ENCODE measurements at regions of chr1 and their contacts with region 1.

Region 1: DNA sequence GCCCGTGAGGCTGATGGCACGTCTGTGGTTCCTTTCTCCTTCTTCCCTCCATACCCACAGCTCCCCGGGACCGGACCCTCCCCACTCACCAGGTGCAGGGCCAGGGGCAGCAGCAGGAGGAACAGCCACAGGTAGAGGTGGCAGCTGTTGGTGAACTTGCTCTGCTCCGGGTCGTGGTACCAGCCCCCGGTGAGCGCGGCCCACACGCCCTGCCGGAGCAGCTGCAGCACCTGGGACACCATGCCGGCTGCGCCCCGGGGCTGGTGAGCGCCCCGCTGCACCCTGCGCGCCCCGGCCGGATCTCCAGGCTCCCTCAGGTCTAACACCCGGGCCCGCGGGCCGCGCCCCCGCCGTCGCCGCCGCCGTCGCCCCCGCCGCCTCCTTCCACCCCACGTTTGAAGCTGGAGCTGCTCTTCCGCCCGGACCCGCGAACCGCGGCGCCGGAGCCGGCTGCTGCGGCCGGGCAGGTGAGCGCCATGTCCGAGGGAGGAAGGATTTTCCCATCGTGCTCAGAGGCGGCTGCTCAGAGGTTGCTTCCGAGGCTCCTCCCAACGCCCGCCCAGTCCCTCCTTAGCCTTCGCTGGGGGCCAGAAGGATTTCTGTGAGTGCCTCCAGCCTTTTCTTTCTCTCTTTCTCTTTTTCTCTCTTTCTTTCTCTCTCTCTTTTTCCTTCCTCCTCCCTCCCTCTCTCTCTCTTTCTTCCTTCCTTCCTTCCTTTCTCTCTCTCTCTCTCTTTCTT is at the start of gene PCNX2:
- DNase-seq: peak; percentile 85
- ATAC-seq: peak; percentile 87
- H3K4me3 Mint-ChIP-seq: peak within 1 kb of the TSS; percentile 95
- H3K27ac Mint-ChIP-seq: peak within 1 kb of the TSS; percentile 96
- H3K4me1 Mint-ChIP-seq: peaks cover 32% of the 10 kb centered on the region
- H3K27me3 Mint-ChIP-seq: no peaks in the 10 kb centered on the region
- total RNA-seq, gene PCNX2: 14.7 to 18.1 TPM

Region 2: GRCh38 chr1:233158322-233158721 is 137.1 kb before region 1 on chr1:
- CTCF ChIA-PET with region 1: no interaction called
- POLR2A ChIA-PET with region 1: no interaction called
- intact Hi-C with region 1: no loop called
- DNase-seq: no peak
- ATAC-seq: no peak
- H3K4me3 Mint-ChIP-seq: no peak overlapping the region
- H3K27ac Mint-ChIP-seq: no peak overlapping the region
- H3K4me1 Mint-ChIP-seq: no peaks in the 10 kb centered on the region
- H3K27me3 Mint-ChIP-seq: no peaks in the 10 kb centered on the region

Region 3: GRCh38 chr1:233281711-233282581 is 13.5 kb before region 1 on chr1:
- CTCF ChIA-PET with region 1: interaction called, 5 read pairs
- POLR2A ChIA-PET with region 1: no interaction called
- intact Hi-C with region 1: loop called in 1 of 2 experiments (anchors 1 kb)
- DNase-seq: peak; percentile 46
- ATAC-seq: peak; percentile 75
- H3K4me3 Mint-ChIP-seq: peak overlapping the region; percentile 53
- H3K27ac Mint-ChIP-seq: peak overlapping the region; percentile 93
- H3K4me1 Mint-ChIP-seq: peaks cover 43% of the 10 kb centered on the region
- H3K27me3 Mint-ChIP-seq: no peaks in the 10 kb centered on the region

Region 4: DNA sequence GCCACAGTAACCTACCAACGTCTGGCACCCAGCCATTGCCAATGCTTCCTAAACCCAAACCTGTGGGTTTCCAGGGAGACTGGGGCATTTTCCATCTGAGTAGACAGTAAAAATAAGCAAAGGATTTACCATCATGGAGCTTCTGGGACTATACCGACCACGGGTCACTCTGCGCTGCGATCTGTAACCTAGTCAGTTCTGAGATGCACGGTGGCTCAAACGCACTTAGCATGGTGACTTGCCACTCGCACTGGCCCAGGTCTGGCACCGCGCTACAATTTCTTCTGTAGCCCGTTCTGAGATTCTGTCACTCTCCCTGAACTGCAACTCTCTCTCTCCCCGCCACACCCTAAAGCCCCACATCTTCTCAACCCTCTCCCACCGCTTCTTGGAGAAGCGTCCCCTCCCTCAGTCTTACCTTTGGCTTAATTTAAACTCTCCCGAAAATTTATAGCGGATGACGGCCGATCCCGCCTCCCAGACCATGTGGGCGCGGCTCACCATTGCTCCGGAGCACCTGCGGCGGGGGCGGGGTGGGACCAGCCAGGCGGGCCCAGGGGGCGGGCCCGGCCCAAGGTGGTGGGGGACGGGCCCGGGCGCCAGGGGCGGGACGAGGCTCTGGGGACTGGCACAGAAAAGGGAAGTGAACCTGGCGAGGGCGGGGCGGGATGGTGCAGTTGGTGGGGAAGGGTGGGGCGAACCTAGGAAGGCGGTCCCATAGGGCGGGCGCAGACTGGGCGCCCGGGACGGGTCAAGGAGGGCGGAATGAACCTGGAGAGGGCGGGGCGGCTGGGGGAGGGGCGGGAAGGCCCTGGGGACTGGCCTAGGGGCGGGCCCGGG is 31.6 kb after region 1 on chr1:
- CTCF ChIA-PET with region 1: no interaction called
- POLR2A ChIA-PET with region 1: no interaction called
- intact Hi-C with region 1: loop called in 1 of 2 experiments (anchors 1 kb)
- DNase-seq: peak; percentile 94
- ATAC-seq: peak; percentile 97
- H3K4me3 Mint-ChIP-seq: peak overlapping the region; percentile 69
- H3K27ac Mint-ChIP-seq: no peak overlapping the region
- H3K4me1 Mint-ChIP-seq: peaks cover 13% of the 10 kb centered on the region
- H3K27me3 Mint-ChIP-seq: peaks cover 13% of the 10 kb centered on the region

Region 5: DNA sequence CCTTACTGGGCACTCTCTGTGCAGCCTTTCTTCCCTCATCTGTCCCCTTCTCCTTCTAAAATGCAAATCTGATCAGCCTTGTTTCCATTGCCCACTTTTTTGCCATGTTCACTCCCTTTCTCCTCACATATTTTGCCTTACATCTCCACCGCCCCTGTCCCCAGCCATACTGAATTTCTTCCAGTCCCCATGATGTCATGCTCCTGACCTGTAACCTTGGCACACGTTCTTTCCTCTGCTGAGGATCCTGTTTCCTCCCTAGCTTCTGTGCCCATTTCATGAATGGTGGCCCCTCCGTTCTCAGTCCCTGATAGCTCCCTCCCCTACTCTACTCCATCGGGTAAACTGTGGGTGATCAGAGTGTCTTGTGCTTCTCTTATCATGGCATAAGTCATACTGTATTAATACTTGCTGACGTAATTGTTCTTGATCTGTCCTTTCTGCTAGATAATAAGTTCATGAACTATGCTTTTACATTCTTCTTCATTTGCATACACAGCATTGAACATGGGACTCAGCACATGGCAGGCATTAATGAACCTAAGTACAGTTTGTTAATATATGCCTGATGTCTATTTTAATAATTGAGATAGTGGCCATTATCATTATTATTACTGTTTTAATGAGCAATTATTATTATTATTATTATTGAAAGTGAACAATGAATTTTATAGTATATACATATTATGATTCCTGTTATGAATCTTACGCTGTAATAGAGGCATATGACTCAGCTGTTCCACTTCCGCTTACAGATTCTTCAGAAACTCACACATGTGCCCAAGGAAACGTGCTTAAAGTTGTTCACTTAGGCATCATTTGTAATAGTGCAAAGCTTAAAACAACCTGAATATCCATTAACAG is 60.7 kb after region 1 on chr1:
- CTCF ChIA-PET with region 1: no interaction called
- POLR2A ChIA-PET with region 1: no interaction called
- intact Hi-C with region 1: no loop called
- DNase-seq: peak; percentile 28
- ATAC-seq: peak; percentile 56
- H3K4me3 Mint-ChIP-seq: no peak overlapping the region
- H3K27ac Mint-ChIP-seq: no peak overlapping the region
- H3K4me1 Mint-ChIP-seq: peaks cover 15% of the 10 kb centered on the region
- H3K27me3 Mint-ChIP-seq: no peaks in the 10 kb centered on the region